Ovary (tissue), 10 donors: ENCODE measurements at regions of chr17 and their contacts with region 1.

Region 1: DNA sequence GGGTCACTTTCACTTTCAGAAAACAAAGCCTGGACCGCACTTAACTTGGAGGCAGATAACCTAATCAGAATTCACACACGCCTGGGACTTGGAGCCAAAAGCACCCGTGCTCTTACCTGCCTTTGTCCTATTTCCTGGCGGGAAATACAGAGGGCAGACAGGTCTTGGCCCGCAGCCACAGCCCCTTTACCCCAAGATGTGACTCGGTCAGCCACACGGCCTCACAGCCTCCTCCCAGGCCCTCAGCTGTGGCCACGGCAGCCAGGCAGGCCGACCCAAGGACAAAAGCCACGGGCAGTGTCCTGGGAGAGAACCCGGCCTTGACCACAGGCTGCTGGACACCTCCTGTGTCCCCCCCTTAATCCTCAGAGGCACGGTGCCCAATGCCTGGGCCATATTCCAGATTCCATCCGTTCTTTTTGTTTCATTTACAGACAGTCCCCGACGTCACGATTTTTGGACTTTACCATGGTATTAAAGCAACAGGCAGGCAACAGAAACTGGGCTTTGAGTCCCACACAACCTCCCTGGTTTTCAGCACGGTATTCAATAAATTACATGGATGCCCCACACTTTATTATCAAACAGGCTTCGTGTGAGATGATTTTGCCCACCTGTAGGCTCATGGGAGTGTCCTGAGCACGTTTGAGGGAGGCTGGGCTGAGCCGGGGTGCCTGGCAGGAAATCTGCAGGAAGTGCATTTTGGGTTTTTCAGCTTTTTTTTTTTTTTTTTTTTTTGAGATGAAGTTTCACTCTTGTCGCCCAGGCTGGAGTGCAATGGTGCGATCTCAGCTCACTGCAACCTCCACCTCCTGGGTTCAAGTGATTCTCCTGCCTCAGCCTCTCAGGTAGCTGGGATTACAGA is 30.0 kb upstream of the GAA start:
- DNase-seq: peak; percentile 75 to 91 (median 85)
- H3K4me3 ChIP-seq: peak overlapping the region; percentile 38
- H3K27ac ChIP-seq: peak overlapping the region; percentile 79 to 85
- H3K4me1 ChIP-seq: peaks cover 17% of the 10 kb centered on the region
- H3K27me3 ChIP-seq: no peaks in the 10 kb centered on the region
- CTCF ChIP-seq: no peak
- EP300 ChIP-seq: no peak
- POLR2A ChIP-seq: no peak

Region 2: DNA sequence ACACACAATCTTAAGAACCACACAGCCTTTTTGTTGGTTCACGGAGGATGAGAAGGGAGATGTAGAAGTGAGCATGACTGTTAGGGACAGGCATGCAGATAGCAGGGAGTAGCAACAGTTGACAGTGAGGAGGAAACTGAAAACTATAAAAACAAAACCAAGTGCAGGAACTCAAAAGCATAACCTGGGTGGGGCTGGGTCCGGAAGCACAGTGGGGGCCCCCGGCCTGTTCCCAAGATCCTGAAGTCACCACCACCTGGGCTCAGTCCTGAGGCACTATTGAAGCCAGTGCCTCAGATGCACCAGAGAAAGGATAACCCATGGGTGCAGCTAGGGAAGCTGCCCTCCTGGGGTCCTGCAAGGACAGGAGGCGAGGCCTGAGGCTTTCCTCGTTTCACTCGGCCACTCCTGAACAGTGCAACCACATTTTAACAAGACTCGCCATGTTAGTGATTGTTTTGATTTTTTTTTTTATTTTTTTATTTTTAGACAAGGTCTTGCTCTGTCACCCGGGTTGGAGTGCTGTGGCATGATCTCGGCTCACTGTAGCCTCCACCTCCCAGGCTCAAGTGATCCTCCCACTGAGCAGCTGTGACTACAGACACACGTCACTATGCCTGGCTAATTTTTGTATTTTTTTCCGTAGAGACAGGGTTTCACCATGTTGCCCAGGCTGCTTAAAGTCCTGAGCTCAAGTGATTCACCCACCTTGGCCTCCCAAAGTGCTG is 204.4 kb before region 1 on chr17:
- intact Hi-C with region 1: no loop called
- DNase-seq: no peak
- H3K4me3 ChIP-seq: no peak overlapping the region
- H3K27ac ChIP-seq: no peak overlapping the region
- H3K4me1 ChIP-seq: no peaks in the 10 kb centered on the region
- H3K27me3 ChIP-seq: no peaks in the 10 kb centered on the region
- CTCF ChIP-seq: no peak
- EP300 ChIP-seq: no peak
- POLR2A ChIP-seq: no peak

Region 3: DNA sequence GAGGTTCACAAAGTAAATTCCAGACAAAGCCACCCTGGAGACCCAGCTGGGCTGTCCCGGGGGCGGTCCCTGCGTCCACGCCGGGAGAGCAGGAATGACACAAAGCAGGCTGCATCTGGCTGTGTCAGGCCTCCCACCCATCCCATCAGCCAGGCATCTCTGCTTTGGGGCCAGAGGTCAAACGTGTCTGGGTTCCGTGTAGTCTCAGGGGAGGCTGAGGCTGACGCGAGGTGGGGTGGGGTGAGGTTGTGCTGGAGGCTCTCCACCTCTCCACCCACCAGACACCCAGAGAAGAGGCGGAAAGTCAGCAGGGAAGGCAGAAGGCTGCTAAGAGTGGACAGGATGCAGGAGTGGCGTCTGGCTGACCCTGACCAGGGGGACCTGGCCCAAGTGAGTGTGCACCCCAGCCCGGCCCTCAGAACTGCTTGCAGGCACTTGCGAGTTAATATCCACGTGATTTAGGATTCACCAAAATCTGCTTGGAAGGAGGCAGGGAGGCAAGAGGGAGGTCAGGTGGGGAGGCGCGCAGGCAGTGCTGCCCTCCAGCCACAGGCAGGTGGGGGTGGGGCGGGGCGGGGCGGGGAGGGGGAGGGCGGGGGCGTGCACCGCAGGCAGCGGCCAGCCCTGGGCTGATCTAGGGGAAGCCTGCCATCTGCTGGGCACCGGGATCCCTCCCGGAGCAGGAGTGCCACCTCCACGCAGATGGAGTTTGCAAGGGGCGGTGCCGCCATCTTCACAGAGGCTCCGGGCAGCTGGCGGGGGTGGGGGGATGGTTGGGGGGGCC is 80.0 kb before region 1 on chr17:
- intact Hi-C with region 1: no loop called
- DNase-seq: peak; percentile 87 to 92 (median 89)
- H3K4me3 ChIP-seq: peak overlapping the region; percentile 31
- H3K27ac ChIP-seq: peak overlapping the region; percentile 67 to 72
- H3K4me1 ChIP-seq: peaks cover 53% of the 10 kb centered on the region
- H3K27me3 ChIP-seq: no peaks in the 10 kb centered on the region
- CTCF ChIP-seq: peak in 1 of 3 donors; percentile 56
- EP300 ChIP-seq: no peak
- POLR2A ChIP-seq: no peak

Region 4: DNA sequence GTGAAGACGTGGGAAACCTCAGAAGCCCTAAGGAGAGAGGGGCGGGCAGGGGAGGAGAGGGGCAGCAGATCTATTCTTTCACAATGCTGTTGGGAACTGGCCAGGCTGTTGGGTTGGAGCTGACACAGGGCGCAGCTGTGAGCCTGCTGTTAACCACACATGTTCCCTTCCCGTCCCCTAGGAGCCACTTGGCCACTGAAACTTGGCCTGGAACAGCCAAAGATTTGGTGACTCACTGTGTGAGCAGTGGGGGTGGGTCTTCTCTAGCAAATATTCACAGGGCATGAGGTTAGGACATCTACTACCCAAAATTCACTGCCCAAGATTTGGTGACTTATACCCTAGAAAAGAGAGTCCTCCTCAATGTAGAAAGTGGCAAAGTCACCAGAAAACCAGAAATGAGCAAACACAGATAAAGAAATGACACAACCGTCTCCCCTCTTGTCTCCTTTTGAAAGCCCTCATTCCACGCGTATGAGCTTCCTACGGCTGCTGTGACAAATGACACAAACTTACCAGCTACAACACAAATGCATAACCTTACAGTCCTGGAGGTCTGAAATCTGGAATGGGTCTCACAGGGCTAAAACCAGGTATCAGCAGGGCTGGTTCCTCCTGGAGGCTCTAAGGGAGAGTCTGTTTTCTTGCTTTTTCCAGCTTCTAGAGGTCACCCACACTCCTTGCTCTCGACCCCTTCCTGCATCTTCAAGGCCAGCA is 41.9 kb before region 1 on chr17:
- intact Hi-C with region 1: loop called in 1 of 4 experiments (anchors 5 kb)
- DNase-seq: peak; percentile 76 to 88 (median 81)
- H3K4me3 ChIP-seq: no peak overlapping the region
- H3K27ac ChIP-seq: peak overlapping the region in 1 of 2 donors; percentile 47
- H3K4me1 ChIP-seq: peaks cover 22% of the 10 kb centered on the region
- H3K27me3 ChIP-seq: no peaks in the 10 kb centered on the region
- CTCF ChIP-seq: no peak
- EP300 ChIP-seq: no peak
- POLR2A ChIP-seq: no peak

Region 5: GRCh38 chr17:80316927-80317702 is 245.8 kb after region 1 on chr17:
- intact Hi-C with region 1: no loop called
- DNase-seq: peak in 3 of 5 donors; percentile 44 to 62 (median 52)
- H3K4me3 ChIP-seq: no peak overlapping the region
- H3K27ac ChIP-seq: no peak overlapping the region
- H3K4me1 ChIP-seq: peaks cover 3% of the 10 kb centered on the region
- H3K27me3 ChIP-seq: no peaks in the 10 kb centered on the region
- CTCF ChIP-seq: no peak
- EP300 ChIP-seq: no peak
- POLR2A ChIP-seq: no peak